ENCODE measurements at regions of chr4 and their contacts with region 1.

Region 1: GRCh38 chr4:38782452-38783108 is at the start of gene TLR10:
- DNase-seq: no peak
- H3K4me3 Mint-ChIP-seq: no peak within 1 kb of the TSS
- H3K27ac Mint-ChIP-seq: no peak within 1 kb of the TSS
- H3K4me1 Mint-ChIP-seq: peaks cover 11% of the 10 kb centered on the region
- H3K27me3 Mint-ChIP-seq: peaks cover 1% of the 10 kb centered on the region
- total RNA-seq, gene TLR10: not detected in 2 replicates

Region 2: DNA sequence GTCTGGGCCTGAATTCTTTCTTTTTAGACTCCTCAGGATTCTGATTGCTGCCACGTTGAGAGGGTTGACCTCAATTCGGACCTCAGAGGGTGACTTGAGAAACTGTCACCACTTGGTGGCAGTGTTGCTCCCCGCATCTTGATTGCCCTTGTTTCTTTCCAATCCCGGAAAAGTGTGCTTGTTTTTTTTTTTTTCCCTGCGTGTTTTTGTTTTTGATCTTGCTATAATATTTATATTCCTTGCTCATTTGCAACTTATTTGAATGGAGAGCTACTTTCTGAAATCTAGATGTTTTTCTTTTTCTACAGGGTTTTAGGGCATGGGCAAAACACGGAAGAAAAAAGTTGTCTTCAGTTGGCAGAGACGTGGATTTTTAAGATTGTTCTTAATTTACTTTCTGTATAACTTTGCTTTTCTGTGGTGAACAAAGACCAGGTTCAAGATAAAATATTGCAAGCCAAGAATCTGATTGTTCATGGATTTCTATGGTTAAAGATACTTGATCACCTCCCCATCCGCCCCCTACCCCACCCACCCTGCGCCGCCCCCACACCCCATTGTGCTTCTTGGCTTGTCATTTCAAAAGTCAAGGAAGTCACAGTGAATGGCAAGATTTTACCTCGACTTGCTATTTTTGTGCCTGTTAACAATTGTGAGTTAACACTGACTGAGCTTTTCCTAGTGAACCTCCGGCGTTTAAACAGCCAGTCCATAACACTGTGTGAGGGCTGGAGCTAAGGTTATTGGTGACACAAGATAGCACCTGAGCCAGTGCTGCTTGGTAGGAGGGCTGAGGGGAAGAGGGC is 720.3 kb before region 1 on chr4:
- intact Hi-C with region 1: loop called (anchors 1 kb)
- DNase-seq: peak; percentile 42
- H3K4me3 Mint-ChIP-seq: peak overlapping the region; percentile 83
- H3K27ac Mint-ChIP-seq: peak overlapping the region; percentile 69
- H3K4me1 Mint-ChIP-seq: peaks cover 16% of the 10 kb centered on the region
- H3K27me3 Mint-ChIP-seq: no peaks in the 10 kb centered on the region

Region 3: DNA sequence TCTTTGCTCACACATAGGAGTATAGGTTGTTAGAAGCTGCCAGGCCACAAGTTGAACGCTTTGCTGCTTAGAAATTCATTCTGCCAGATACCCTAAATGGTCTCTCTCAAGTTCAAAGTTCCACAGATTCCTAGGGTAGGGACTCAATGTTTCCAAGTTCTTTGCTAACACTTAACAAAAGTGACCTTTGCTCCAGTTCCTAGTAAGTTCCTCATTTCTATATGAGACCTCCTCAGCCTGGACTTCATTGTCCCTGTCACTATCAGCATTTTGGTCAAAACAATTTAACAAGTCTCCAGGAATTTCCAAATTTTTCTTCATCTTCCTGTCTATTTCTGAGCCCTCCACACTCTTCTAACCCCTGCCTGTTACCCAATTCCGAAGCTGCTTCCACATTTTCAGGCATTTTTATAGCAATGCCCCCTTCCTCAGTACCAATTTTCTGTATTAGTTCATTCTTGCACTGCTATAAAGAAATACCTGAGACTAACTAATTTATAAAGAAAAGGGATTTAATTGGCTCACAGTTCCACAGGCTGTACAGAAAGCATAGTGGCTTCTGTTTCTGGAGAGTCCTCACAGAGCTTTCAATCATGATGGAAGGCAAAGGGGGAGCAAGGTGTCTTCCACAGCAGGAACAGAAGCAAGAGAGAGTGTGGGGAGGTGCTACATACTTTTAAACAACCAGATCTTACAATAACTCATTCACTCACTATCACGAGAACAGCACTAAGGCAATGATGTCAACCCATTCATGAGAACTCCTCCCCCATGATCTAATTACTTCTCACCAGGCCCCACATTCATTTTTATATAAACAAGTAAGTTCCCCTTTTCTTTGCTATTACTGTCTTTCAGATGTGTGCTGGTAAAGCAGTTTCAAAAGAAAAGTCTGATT is 33.6 kb after region 1 on chr4:
- intact Hi-C with region 1: no loop called
- DNase-seq: no peak
- H3K4me3 Mint-ChIP-seq: no peak overlapping the region
- H3K27ac Mint-ChIP-seq: no peak overlapping the region
- H3K4me1 Mint-ChIP-seq: peaks cover 45% of the 10 kb centered on the region
- H3K27me3 Mint-ChIP-seq: no peaks in the 10 kb centered on the region